ENCODE measurements at regions of chr14 and their contacts with region 1.

Region 1: GRCh38 chr14:22973217-22974032 is 8.9 kb downstream of the AJUBA start:
- DNase-seq: peak in 11 of 35 experiments; percentile 9 to 71 (median 30)
- ATAC-seq: peak; percentile 39 to 66 (median 60)
- H3K4me3 ChIP-seq: no peak overlapping the region
- H3K4me3 Mint-ChIP-seq: no peak overlapping the region
- H3K27ac ChIP-seq: no peak overlapping the region
- H3K27ac Mint-ChIP-seq: no peak overlapping the region
- H3K4me1 ChIP-seq: no peaks in the 10 kb centered on the region
- H3K4me1 Mint-ChIP-seq: no peaks in the 10 kb centered on the region
- H3K27me3 ChIP-seq: peaks cover 0 to 4% of the 10 kb centered on the region in 2 experiments
- H3K27me3 Mint-ChIP-seq: peaks cover 0 to 2% of the 10 kb centered on the region in 2 donors

Region 2: GRCh38 chr14:22491683-22492621 is 481.5 kb before region 1 on chr14:
- CTCF ChIA-PET with region 1: no interaction called
- POLR2A ChIA-PET with region 1: no interaction called
- DNase-seq: peak in 22 of 35 experiments; percentile 21 to 73 (median 40)
- ATAC-seq: peak; percentile 9 to 80 (median 16)
- H3K4me3 ChIP-seq: peak overlapping the region; percentile 25 to 45
- H3K4me3 Mint-ChIP-seq: peak overlapping the region; percentile 84 to 87 (median 86)
- H3K27ac ChIP-seq: peak overlapping the region; percentile 77
- H3K27ac Mint-ChIP-seq: peak overlapping the region; percentile 91 to 98
- H3K4me1 ChIP-seq: peaks cover 3 to 14% of the 10 kb centered on the region in 2 experiments
- H3K4me1 Mint-ChIP-seq: peaks cover 27 to 66% (median 29%) of the 10 kb centered on the region in 3 donors
- H3K27me3 ChIP-seq: no peaks in the 10 kb centered on the region
- H3K27me3 Mint-ChIP-seq: no peaks in the 10 kb centered on the region

Region 3: GRCh38 chr14:23013054-23013748 is 39.8 kb after region 1 on chr14:
- CTCF ChIA-PET with region 1: no interaction called
- POLR2A ChIA-PET with region 1: no interaction called
- DNase-seq: no peak
- ATAC-seq: no peak
- H3K4me3 ChIP-seq: no peak overlapping the region
- H3K4me3 Mint-ChIP-seq: no peak overlapping the region
- H3K27ac ChIP-seq: no peak overlapping the region
- H3K27ac Mint-ChIP-seq: peak overlapping the region; percentile 24 to 30
- H3K4me1 ChIP-seq: peaks cover 8 to 19% of the 10 kb centered on the region in 2 experiments
- H3K4me1 Mint-ChIP-seq: peaks cover 21 to 29% (median 25%) of the 10 kb centered on the region in 3 donors
- H3K27me3 ChIP-seq: no peaks in the 10 kb centered on the region
- H3K27me3 Mint-ChIP-seq: no peaks in the 10 kb centered on the region

Region 4: GRCh38 chr14:23057757-23058653 is 84.6 kb after region 1 on chr14:
- CTCF ChIA-PET with region 1: interaction called, 7 to 10 read pairs
- POLR2A ChIA-PET with region 1: interaction called in 1 of 2 experiments, 7 read pairs
- DNase-seq: peak; percentile 61 to 93 (median 80)
- ATAC-seq: peak; percentile 71 to 77 (median 72)
- H3K4me3 ChIP-seq: peak overlapping the region; percentile 77 to 86
- H3K4me3 Mint-ChIP-seq: peak overlapping the region; percentile 82 to 84 (median 84)
- H3K27ac ChIP-seq: no peak overlapping the region
- H3K27ac Mint-ChIP-seq: peak overlapping the region; percentile 70 to 81
- H3K4me1 ChIP-seq: peaks cover 6 to 20% of the 10 kb centered on the region in 2 experiments
- H3K4me1 Mint-ChIP-seq: peaks cover 14 to 21% (median 17%) of the 10 kb centered on the region in 3 donors
- H3K27me3 ChIP-seq: peaks cover 0 to 6% of the 10 kb centered on the region in 2 experiments
- H3K27me3 Mint-ChIP-seq: no peaks in the 10 kb centered on the region

Region 5: DNA sequence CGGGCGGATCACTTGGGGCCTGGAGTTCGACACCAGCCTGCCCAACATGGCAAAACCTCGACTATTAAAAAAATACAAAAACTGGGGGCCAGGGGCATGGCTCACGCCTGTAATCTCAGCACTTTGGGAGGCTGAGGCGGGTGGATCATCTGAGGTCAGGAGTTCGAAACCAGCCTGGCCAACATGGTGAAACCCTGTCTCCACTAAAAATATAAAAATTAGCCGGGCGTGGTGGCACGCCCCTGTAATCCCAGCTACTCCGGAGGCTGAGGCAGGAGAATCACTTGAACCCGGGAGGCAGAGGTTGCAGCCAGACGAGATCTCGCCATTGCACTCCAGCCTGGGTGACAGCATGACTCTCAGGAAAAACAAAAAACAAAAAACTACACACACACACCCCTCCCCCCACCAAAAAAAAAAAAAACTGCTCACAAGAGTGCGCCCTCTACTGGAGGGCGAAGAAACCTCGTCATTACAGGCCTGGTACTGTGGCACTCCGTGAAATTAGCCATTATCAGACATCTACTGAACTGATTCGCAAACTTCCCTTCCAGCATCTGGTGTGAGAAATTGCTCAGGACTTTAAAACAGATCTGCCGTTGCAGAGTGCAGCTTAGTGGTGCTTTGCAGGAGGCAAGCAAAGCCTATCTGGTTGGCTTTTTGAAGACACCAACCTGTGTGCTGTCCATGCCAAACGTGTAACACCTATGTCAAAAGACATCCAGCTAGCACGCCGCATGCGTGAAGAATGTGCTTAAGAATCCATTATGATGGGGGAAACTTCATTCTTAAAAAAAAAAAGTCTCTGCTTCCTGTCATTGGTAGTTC is 321.5 kb after region 1 on chr14:
- CTCF ChIA-PET with region 1: interaction called in 1 of 2 experiments, 10 read pairs
- POLR2A ChIA-PET with region 1: no interaction called
- DNase-seq: peak in 33 of 35 experiments; percentile 18 to 83 (median 45)
- ATAC-seq: peak; percentile 69 to 90 (median 72)
- H3K4me3 ChIP-seq: no peak overlapping the region
- H3K4me3 Mint-ChIP-seq: peak overlapping the region in 1 of 3 donors; percentile 49
- H3K27ac ChIP-seq: no peak overlapping the region
- H3K27ac Mint-ChIP-seq: peak overlapping the region; percentile 25 to 66
- H3K4me1 ChIP-seq: peaks cover 0 to 12% of the 10 kb centered on the region in 2 experiments
- H3K4me1 Mint-ChIP-seq: peaks cover 21 to 30% (median 21%) of the 10 kb centered on the region in 3 donors
- H3K27me3 ChIP-seq: no peaks in the 10 kb centered on the region
- H3K27me3 Mint-ChIP-seq: peaks cover 0 to 2% of the 10 kb centered on the region in 2 donors

Measured in T-cell (primary cell).